ENCODE measurements at regions of chr7 and their contacts with region 1.

Region 1: GRCh38 chr7:51141451-51142003 is 175.1 kb downstream of the COBL start:
- DNase-seq: peak in 1 of 2 experiments; percentile 52
- H3K4me3 ChIP-seq: no peak overlapping the region
- H3K27ac ChIP-seq: no peak overlapping the region
- H3K4me1 ChIP-seq: peaks cover 4 to 8% (median 6%) of the 10 kb centered on the region in 4 experiments
- H3K27me3 ChIP-seq: no peaks in the 10 kb centered on the region
- CTCF ChIP-seq: peak in 2 of 3 experiments; percentile 54 to 58; a peak in 2 of 4 replicates
- EP300 ChIP-seq: no peak
- POLR2A ChIP-seq: no peak
- RAD21 ChIP-seq: peak; percentile 85 to 86

Region 2: GRCh38 chr7:50467817-50468610 is 673.5 kb before region 1 on chr7:
- CTCF ChIA-PET with region 1: interaction called, 11 read pairs
- POLR2A ChIA-PET with region 1: no interaction called
- DNase-seq: peak; percentile 36 to 92
- H3K4me3 ChIP-seq: no peak overlapping the region
- H3K27ac ChIP-seq: no peak overlapping the region
- H3K4me1 ChIP-seq: no peaks in the 10 kb centered on the region; a peak in 1 of 7 replicates
- H3K27me3 ChIP-seq: peaks cover 0 to 14% (median 9%) of the 10 kb centered on the region in 4 experiments; a peak in 6 of 7 replicates
- CTCF ChIP-seq: peak; percentile 84 to 87 (median 87)
- EP300 ChIP-seq: no peak
- POLR2A ChIP-seq: no peak
- RAD21 ChIP-seq: peak; percentile 95 to 96

Region 3: GRCh38 chr7:51009704-51010496 is 131.6 kb before region 1 on chr7:
- CTCF ChIA-PET with region 1: interaction called, 11 read pairs
- POLR2A ChIA-PET with region 1: no interaction called
- DNase-seq: peak in 1 of 2 experiments; percentile 37
- H3K4me3 ChIP-seq: no peak overlapping the region
- H3K27ac ChIP-seq: no peak overlapping the region
- H3K4me1 ChIP-seq: no peaks in the 10 kb centered on the region
- H3K27me3 ChIP-seq: no peaks in the 10 kb centered on the region
- CTCF ChIP-seq: no peak
- EP300 ChIP-seq: no peak
- POLR2A ChIP-seq: no peak
- RAD21 ChIP-seq: no peak

Region 4: DNA sequence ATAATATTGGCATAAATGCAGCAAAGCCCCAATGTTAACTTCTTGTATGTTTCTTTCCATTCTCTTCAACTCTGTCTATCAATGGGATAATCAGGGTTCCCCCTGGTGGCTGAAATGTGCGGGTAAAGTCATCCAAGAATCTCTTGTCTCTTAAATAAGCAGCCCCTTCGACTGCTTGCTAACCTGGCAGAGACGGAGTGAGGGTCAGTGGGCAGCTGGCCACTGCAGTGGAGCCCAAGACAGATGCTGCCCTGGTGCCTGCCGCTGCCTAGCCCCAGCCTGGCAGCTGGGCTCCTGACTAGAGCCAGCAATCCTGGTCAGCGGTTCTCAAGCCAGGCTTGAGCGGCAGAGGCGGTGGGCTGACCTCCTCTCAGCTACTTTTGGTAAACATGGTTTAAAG is 73.8 kb before region 1 on chr7:
- CTCF ChIA-PET with region 1: interaction called, 29 read pairs
- POLR2A ChIA-PET with region 1: no interaction called
- DNase-seq: peak in 1 of 2 experiments; percentile 84
- H3K4me3 ChIP-seq: no peak overlapping the region
- H3K27ac ChIP-seq: no peak overlapping the region
- H3K4me1 ChIP-seq: peaks cover 0 to 3% (median under 1%) of the 10 kb centered on the region in 4 experiments; a peak in 3 of 7 replicates
- H3K27me3 ChIP-seq: no peaks in the 10 kb centered on the region
- CTCF ChIP-seq: peak in 2 of 3 experiments; percentile 66 to 77; a peak in 3 of 4 replicates
- EP300 ChIP-seq: no peak
- POLR2A ChIP-seq: no peak
- RAD21 ChIP-seq: peak; percentile 63 to 70

Region 5: GRCh38 chr7:51154201-51154600 is 12.7 kb after region 1 on chr7:
- CTCF ChIA-PET with region 1: interaction called, 76 read pairs
- POLR2A ChIA-PET with region 1: interaction called, 4 read pairs
- DNase-seq: no peak
- H3K4me3 ChIP-seq: no peak overlapping the region
- H3K27ac ChIP-seq: no peak overlapping the region
- H3K4me1 ChIP-seq: peaks cover 0 to 3% (median 0%) of the 10 kb centered on the region in 4 experiments; a peak in 3 of 7 replicates
- H3K27me3 ChIP-seq: no peaks in the 10 kb centered on the region
- CTCF ChIP-seq: no peak
- EP300 ChIP-seq: no peak
- POLR2A ChIP-seq: no peak
- RAD21 ChIP-seq: no peak

Region 6: DNA sequence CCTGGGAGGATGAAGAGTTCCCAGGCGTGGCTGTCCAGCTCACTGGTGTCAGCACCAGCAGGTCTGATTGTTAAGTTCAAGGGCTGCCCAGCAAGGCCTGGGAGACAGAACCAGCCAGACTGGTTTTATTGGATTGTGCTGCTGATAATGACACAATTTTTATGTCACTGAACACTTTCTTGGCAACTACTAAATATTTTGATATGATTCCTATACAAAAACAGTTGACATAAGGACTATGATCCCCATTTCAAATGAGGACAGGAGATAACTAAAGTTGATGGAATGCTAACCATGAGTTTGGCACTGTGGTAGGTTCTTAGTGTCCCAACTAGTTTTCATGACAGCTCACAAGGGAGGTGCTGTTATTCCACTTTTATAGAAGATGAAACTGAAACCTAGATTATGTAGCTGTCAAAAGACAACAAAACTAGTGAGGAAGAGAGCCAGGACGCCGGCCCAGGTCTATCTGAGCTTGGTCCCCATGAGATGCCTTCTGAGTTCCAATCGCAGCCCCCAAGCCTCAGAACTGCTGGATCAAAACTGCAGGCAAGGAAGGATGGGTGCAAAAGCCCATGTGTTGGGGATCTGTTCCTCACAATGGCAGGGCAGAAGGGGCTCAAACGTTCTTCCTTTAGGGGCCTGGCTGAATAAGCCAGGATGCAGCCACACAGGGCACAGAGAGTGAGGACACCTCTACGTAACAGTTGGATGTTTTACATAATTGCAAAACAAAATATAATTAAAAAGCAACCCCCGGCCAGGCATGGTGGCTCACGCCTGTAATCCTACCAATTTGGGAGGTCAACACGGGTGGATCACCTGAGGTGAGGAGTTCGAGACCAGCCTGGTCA is 122.3 kb after region 1 on chr7:
- CTCF ChIA-PET with region 1: no interaction called
- POLR2A ChIA-PET with region 1: no interaction called
- DNase-seq: peak in 1 of 2 experiments; percentile 33
- H3K4me3 ChIP-seq: no peak overlapping the region
- H3K27ac ChIP-seq: no peak overlapping the region
- H3K4me1 ChIP-seq: peaks cover 0 to 10% (median 2%) of the 10 kb centered on the region in 4 experiments; a peak in 1 of 7 replicates
- H3K27me3 ChIP-seq: no peaks in the 10 kb centered on the region
- CTCF ChIP-seq: no peak
- EP300 ChIP-seq: no peak
- POLR2A ChIP-seq: no peak
- RAD21 ChIP-seq: no peak

Measured in H1 (cell line).